CD14-positive monocyte (primary cell): ENCODE measurements at regions of chr14 and their contacts with region 1.

Region 1: GRCh38 chr14:103385152-103385993 is at the start of gene MARK3:
- DNase-seq: peak; percentile 96 to 97 (median 96)
- H3K4me3 ChIP-seq: peak within 1 kb of the TSS; percentile 85 to 99 (median 86)
- H3K4me3 Mint-ChIP-seq: peak within 1 kb of the TSS; percentile 96 to 98
- H3K27ac ChIP-seq: peak within 1 kb of the TSS; percentile 86 to 92
- H3K27ac Mint-ChIP-seq: peak within 1 kb of the TSS; percentile 93 to 98 (median 96)
- H3K4me1 ChIP-seq: peaks cover 54 to 75% of the 10 kb centered on the region in 2 donors
- H3K4me1 Mint-ChIP-seq: peaks cover 62% of the 10 kb centered on the region
- H3K27me3 ChIP-seq: no peaks in the 10 kb centered on the region
- H3K27me3 Mint-ChIP-seq: no peaks in the 10 kb centered on the region
- CTCF ChIP-seq: peak; percentile 27
- polyA plus RNA-seq, gene MARK3: 29.3 to 163 (median 44.7) TPM

Region 2: GRCh38 chr14:103346286-103346685 is 39.1 kb before region 1 on chr14:
- intact Hi-C with region 1: loop called (anchors 5 kb)
- DNase-seq: no peak
- H3K4me3 ChIP-seq: no peak overlapping the region
- H3K4me3 Mint-ChIP-seq: no peak overlapping the region
- H3K27ac ChIP-seq: no peak overlapping the region
- H3K27ac Mint-ChIP-seq: peak overlapping the region in 4 of 7 donors; percentile 30 to 45 (median 32)
- H3K4me1 ChIP-seq: no peaks in the 10 kb centered on the region
- H3K4me1 Mint-ChIP-seq: no peaks in the 10 kb centered on the region
- H3K27me3 ChIP-seq: no peaks in the 10 kb centered on the region
- H3K27me3 Mint-ChIP-seq: peaks cover 0 to 2% (median 0%) of the 10 kb centered on the region in 3 donors
- CTCF ChIP-seq: no peak